Pancreas (tissue), 10 donors: ENCODE measurements at regions of chr4 and their contacts with region 1.

Region 1: DNA sequence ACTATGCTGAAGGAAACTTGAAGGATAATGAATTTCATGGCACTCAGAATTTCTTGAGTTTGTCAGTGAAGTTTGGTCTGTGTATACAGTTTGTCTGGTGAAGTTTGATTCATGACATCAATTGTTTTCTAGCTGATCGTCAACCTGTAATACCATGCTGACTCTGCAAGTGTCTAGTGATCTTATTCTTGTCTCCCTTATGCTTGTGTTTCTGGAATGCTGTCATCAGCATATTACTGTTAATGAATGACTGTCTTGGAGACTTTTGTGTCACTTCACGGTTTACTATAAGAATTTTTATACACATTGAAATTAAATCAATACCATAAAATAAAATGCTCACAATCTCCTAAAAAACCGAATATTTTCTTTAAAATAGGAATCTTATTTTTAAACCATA is 779.0 kb downstream of the CCSER1 start:
- DNase-seq: no peak
- ATAC-seq: no peak
- H3K4me3 ChIP-seq: no peak overlapping the region
- H3K27ac ChIP-seq: no peak overlapping the region
- H3K4me1 ChIP-seq: no peaks in the 10 kb centered on the region
- H3K27me3 ChIP-seq: no peaks in the 10 kb centered on the region
- CTCF ChIP-seq: no peak

Region 2: GRCh38 chr4:90970021-90970420 is 63.8 kb after region 1 on chr4:
- intact Hi-C with region 1: no loop called
- DNase-seq: no peak
- ATAC-seq: no peak
- H3K4me3 ChIP-seq: no peak overlapping the region
- H3K27ac ChIP-seq: no peak overlapping the region
- H3K4me1 ChIP-seq: no peaks in the 10 kb centered on the region
- H3K27me3 ChIP-seq: no peaks in the 10 kb centered on the region
- CTCF ChIP-seq: no peak

Region 3: GRCh38 chr4:91064157-91064853 is 158.1 kb after region 1 on chr4:
- intact Hi-C with region 1: no loop called
- DNase-seq: peak in 2 of 6 donors; percentile 11 to 22
- ATAC-seq: peak in 3 of 4 donors; percentile 74 to 87 (median 77)
- H3K4me3 ChIP-seq: no peak overlapping the region
- H3K27ac ChIP-seq: no peak overlapping the region
- H3K4me1 ChIP-seq: peaks cover 6 to 12% (median 11%) of the 10 kb centered on the region in 3 donors
- H3K27me3 ChIP-seq: no peaks in the 10 kb centered on the region
- CTCF ChIP-seq: no peak

Region 4: GRCh38 chr4:91171210-91171609 is 265.0 kb after region 1 on chr4:
- intact Hi-C with region 1: loop called in 1 of 3 experiments (anchors 10 kb)
- DNase-seq: no peak
- ATAC-seq: no peak
- H3K4me3 ChIP-seq: no peak overlapping the region
- H3K27ac ChIP-seq: no peak overlapping the region
- H3K4me1 ChIP-seq: no peaks in the 10 kb centered on the region
- H3K27me3 ChIP-seq: no peaks in the 10 kb centered on the region
- CTCF ChIP-seq: no peak

Region 5: DNA sequence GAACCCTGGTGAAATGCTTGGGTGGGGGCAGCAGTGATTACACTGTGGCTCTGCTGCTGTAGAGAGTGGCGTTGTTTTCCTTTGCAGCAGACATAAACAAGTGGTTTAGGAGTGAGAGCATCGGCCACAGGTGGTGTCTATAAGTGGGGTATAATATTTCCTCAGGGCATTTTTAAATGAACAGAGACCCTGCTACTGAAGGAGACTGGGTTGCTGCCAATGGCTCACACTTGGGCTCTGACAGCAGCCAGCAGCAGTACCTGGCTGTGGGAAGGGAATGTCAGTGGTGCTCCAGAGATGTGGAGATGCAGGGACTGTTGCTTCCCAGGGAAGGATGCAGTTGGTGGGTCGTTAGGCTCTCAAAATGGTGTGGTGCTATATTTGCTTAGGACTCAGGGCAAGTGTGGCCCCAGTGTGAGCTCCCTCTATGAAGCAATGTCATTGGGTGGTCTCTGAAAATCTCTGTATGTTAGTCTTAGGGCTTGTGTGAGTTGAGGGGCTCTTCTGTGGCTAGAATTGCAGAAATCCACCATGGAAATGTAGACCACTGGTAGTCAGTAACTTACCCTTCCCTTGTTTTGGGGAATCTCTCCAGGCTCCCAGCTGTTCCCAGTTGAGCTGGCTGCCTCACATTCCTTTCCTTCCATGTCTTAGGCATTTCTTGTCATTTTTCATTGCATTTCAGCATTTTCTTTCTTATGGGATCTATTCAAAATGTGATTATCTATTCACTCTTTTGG is 374.5 kb after region 1 on chr4:
- intact Hi-C with region 1: no loop called
- DNase-seq: no peak
- ATAC-seq: no peak
- H3K4me3 ChIP-seq: no peak overlapping the region
- H3K27ac ChIP-seq: no peak overlapping the region
- H3K4me1 ChIP-seq: no peaks in the 10 kb centered on the region
- H3K27me3 ChIP-seq: no peaks in the 10 kb centered on the region
- CTCF ChIP-seq: no peak